Activated CD4-positive, alpha-beta memory T cell treated with anti-CD3 and anti-CD28 coated beads, Interleukin-2, amount 10 ng/mL, durations not matched to agents 7 days and 5 days (primary cell): ENCODE measurements at regions of chr2 and their contacts with region 1.

Region 1: DNA sequence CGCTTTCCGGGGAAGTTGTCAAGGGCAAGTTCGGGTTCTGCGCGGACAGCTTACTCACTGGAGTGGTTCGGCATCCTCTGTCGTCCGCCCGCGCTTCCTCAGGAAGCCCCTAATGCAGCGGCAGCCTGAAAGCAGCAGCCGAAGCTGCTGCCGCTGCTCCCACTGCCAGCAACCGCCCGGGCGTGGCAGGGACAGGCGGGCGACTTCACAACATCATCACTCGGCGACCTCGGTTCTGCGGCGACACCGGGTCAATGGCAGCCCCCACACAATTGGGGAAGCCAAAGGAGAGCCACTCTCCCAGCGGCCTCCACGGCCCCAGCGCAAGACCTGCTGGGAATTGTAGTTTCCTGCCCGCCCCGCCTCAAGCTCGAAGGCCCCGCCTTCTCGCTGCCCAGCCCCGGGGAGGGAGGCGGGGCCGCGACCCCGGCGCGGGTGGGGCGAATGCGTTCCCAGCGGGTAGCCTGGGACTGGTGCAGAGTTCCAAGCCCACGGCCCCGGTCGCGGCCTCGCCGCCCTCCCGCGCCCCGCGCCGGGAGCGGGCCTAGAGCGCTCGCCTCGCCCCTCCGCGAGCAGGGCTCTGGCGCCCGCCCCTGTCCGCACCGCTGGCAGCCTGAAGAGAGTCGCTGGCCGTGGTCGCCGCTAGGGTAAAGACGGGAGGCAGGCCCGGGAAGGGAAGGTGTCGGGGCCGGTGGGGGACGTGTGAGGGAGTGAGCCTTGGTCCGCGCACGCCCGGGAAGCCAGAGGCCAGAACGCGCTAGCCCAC is at the starts of genes STRADB and TRAK2:
- DNase-seq: peak; percentile 97
- H3K4me3 Mint-ChIP-seq: peak within 1 kb of the TSS; percentile 95
- H3K27ac Mint-ChIP-seq: peak within 1 kb of the TSS; percentile 96
- H3K4me1 Mint-ChIP-seq: peaks cover 53% of the 10 kb centered on the region
- H3K27me3 Mint-ChIP-seq: no peaks in the 10 kb centered on the region
- total RNA-seq, gene STRADB: 18.9 to 19.2 TPM
- total RNA-seq, gene TRAK2: 47.3 to 49.3 TPM

Region 2: DNA sequence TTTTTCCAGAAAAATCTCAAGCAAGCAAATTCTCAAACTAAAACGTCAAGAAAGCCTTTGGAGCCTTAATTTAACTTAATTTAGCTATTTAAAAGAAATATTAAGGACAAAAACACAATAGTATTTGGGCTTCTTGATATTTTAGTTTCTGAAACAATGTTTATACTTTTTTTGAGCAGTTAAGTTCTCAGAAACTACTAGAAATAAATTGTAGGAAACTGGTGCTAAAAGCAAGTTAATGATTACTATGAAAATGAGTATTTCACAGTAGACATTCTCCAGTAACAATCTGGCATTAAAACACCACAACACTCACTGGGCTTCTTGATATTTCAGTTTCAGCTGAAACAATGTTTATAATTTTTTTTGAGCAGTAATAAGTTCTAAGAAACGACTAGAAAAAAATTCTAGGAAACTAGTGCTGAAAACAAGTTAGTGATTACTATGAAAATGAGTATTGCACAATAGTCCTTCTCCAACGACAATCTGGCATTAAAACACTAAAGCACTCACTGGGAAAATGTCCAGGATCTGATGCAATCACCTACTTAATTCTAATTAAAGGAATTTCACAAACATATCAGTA is 45.3 kb before region 1 on chr2:
- CTCF ChIA-PET with region 1: interaction called, 3 read pairs
- POLR2A ChIA-PET with region 1: interaction called, 22 read pairs
- DNase-seq: no peak
- H3K4me3 Mint-ChIP-seq: no peak overlapping the region
- H3K27ac Mint-ChIP-seq: peak overlapping the region; percentile 44
- H3K4me1 Mint-ChIP-seq: peaks cover 45% of the 10 kb centered on the region
- H3K27me3 Mint-ChIP-seq: no peaks in the 10 kb centered on the region

Region 3: DNA sequence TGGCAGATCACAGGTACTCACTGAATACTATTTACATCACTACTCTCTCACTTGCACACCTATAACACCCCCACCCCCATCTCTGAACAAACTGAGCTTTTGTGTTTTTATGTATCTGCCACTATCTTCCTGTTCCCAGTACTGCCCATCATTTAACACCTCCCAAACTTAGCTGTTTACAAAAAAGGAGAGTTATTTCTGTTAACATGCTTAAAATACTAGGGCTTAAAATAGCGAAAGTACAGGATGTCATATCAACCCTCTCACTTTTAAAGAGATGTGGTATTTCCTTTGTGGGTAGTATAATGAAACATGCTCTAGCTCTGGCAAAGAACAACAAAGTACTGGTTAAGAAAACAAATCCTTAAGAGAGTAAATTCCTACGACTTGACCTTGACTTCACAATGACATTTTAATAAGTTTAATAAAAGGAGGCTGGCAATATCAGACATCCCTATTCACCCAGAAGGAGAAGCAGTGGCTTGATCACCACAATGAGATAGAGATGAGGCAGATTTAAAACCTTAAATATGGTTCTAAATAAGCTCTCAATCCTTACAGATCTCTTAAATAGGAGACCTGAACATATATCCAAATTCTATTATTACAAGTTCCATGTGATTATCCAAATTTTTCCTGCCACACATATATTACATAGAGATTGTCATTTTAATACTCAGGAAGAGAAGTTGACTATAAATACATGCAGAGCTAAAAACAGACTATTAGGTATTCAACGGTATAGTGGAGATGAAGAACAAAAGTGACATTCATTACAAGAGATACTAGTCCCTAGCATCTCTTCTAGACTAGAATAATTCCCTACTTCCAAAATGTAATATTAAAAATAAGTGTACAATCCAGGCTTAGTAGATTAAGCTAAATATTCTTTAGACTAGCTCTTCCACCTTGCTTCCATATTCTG is 37.1 kb before region 1 on chr2:
- CTCF ChIA-PET with region 1: interaction called, 4 read pairs
- POLR2A ChIA-PET with region 1: interaction called, 22 read pairs
- DNase-seq: no peak
- H3K4me3 Mint-ChIP-seq: no peak overlapping the region
- H3K27ac Mint-ChIP-seq: no peak overlapping the region
- H3K4me1 Mint-ChIP-seq: peaks cover 8% of the 10 kb centered on the region
- H3K27me3 Mint-ChIP-seq: no peaks in the 10 kb centered on the region

Region 4: GRCh38 chr2:201432038-201432620 is 19.3 kb before region 1 on chr2:
- CTCF ChIA-PET with region 1: interaction called, 9 read pairs
- POLR2A ChIA-PET with region 1: interaction called, 48 read pairs
- DNase-seq: no peak
- H3K4me3 Mint-ChIP-seq: peak overlapping the region; percentile 23
- H3K27ac Mint-ChIP-seq: peak overlapping the region; percentile 88
- H3K4me1 Mint-ChIP-seq: peaks cover 40% of the 10 kb centered on the region
- H3K27me3 Mint-ChIP-seq: no peaks in the 10 kb centered on the region

Region 5: DNA sequence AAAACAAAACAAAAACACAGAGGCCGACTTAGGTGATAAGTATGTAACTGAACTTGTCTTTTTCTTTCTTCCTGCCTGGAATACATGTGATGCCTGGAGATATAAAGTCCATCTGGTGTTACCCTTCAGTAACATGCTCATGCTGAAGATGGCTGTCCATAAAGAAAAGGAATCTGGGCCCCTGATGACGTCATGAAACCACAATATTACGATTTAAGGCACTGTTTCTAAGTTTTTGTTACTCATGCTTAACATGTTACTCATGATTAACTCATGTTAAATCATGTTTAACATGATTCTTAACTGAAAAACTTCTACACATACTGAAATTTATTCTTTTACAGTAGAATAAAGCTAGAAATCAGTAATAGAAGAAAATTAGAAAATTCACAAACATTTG is 49.1 kb after region 1 on chr2:
- CTCF ChIA-PET with region 1: no interaction called
- POLR2A ChIA-PET with region 1: no interaction called
- DNase-seq: no peak
- H3K4me3 Mint-ChIP-seq: no peak overlapping the region
- H3K27ac Mint-ChIP-seq: no peak overlapping the region
- H3K4me1 Mint-ChIP-seq: no peaks in the 10 kb centered on the region
- H3K27me3 Mint-ChIP-seq: no peaks in the 10 kb centered on the region

Region 6: DNA sequence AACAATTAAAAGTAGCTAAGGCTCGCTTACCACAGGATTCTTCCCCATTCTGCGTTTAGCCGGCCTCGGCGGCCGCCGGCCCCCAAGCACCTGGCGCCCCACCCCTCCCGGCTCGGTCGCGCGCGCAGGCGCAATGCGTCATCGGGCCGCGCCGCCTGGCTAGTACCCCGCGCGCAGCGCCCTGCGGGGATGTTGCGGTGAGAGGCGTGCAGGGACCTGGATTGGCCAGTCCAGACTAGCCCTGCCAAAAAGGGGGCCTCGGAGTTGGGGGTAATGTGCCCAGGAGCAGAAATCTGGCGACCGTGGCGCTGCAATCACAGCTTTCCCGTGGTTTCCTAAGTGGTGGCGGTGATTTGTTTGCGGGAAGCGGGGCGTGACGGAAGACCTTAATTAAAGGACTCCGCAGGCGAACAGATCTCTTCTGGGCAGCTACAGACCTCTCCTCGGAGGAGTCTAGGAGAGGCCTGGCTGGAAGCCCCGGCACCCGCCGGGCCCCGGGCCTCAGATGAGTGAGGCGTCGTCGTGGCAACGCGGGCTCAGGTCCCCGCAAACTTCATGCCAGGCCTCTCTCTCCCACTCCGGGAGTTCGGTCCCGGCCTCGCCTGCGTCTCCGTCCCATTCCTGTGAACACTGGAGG is 191.2 kb after region 1 on chr2:
- CTCF ChIA-PET with region 1: interaction called, 3 read pairs
- POLR2A ChIA-PET with region 1: interaction called, 21 read pairs
- DNase-seq: peak; percentile 87
- H3K4me3 Mint-ChIP-seq: peak overlapping the region; percentile 92
- H3K27ac Mint-ChIP-seq: peak overlapping the region; percentile 87
- H3K4me1 Mint-ChIP-seq: peaks cover 22% of the 10 kb centered on the region
- H3K27me3 Mint-ChIP-seq: peaks cover 1% of the 10 kb centered on the region